Sigmoid colon (tissue), 7 donors: ENCODE measurements at regions of chr6 and their contacts with region 1.

Region 1: GRCh38 chr6:21664314-21665109 is 71.0 kb downstream of the SOX4 start:
- DNase-seq: peak; percentile 74
- H3K4me3 ChIP-seq: peak overlapping the region; percentile 42 to 73 (median 64)
- H3K27ac ChIP-seq: peak overlapping the region; percentile 19 to 81 (median 62)
- H3K4me1 ChIP-seq: peaks cover 0 to 47% (median 16%) of the 10 kb centered on the region in 4 donors
- H3K27me3 ChIP-seq: peaks cover 0 to 10% (median 0%) of the 10 kb centered on the region in 3 donors
- CTCF ChIP-seq: no peak
- EP300 ChIP-seq: no peak
- POLR2A ChIP-seq: no peak

Region 2: DNA sequence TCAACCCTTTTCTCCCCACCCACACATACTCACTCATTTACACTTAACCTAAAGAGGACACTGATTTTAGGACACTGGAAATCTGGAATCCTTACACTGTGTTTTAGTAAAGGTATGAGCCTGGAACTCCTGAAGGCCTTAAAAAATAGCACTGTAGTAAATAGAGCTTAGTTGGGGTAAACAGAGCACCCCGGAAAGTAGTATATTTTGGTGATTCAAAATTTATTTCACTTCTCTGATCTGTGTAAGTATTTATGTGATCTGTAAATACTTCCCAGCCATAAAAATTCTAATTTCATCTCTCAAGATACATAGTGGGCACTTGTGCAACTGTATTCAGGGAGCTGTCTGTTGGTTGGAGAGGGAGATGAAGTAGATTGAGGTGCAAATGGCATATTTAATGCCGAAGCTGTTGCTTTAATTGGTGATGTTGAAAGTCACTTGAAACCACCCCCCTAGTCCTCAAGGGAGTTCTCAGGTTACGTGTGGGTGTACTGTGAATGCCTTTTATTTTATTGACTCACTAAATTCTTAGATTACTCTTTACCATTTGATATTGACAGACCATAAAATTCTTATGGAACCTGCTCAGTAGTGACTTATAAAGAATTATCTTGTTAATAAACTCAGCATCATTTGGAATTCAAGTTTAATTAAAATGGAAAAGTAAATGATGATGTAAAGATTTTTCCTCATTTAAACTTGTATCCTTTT is 84.0 kb after region 1 on chr6:
- intact Hi-C with region 1: loop called (anchors 5 kb)
- DNase-seq: no peak
- H3K4me3 ChIP-seq: no peak overlapping the region
- H3K27ac ChIP-seq: peak overlapping the region in 3 of 4 donors; percentile 49 to 63 (median 60)
- H3K4me1 ChIP-seq: peaks cover 0 to 53% (median 38%) of the 10 kb centered on the region in 4 donors
- H3K27me3 ChIP-seq: no peaks in the 10 kb centered on the region
- CTCF ChIP-seq: no peak
- EP300 ChIP-seq: no peak
- POLR2A ChIP-seq: no peak

Region 3: GRCh38 chr6:21808045-21808470 is 143.5 kb after region 1 on chr6:
- intact Hi-C with region 1: loop called (anchors 2 kb)
- DNase-seq: no peak
- H3K4me3 ChIP-seq: peak overlapping the region in 1 of 4 donors; percentile 19
- H3K27ac ChIP-seq: peak overlapping the region; percentile 38 to 82 (median 71)
- H3K4me1 ChIP-seq: peaks cover 0 to 41% (median 22%) of the 10 kb centered on the region in 4 donors
- H3K27me3 ChIP-seq: no peaks in the 10 kb centered on the region
- CTCF ChIP-seq: no peak
- EP300 ChIP-seq: no peak
- POLR2A ChIP-seq: no peak

Region 4: DNA sequence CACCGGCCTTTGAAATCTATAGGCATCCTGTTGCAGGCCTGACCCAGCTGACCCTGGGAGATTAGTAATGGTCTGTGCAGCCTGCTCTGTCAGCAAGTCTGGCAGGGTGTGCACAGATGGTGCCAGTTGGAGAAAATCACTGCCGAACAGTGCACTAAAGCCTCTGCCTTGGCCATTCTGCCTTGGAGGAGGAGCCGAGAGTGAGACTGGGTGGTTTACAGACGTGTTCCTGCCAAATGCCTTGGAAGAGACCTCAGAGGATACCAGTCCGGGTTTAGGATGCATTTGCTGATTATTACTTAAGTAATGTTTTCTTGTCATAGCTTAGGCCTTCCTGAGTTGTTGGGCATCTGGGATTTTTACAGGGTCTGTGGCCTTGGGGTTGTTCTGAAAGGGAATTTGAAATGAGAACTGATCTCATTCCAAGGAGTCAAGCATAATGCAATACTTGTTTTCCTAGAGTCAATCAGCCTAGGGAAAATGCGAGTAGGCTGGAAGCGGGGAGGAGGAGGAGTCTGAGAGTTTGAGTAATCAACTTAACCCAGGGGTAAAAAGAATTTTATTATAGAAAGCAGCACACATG is 221.1 kb after region 1 on chr6:
- intact Hi-C with region 1: loop called (anchors 5 kb)
- DNase-seq: peak; percentile 74
- H3K4me3 ChIP-seq: no peak overlapping the region
- H3K27ac ChIP-seq: peak overlapping the region; percentile 62 to 79 (median 74)
- H3K4me1 ChIP-seq: peaks cover 0 to 39% (median 34%) of the 10 kb centered on the region in 4 donors
- H3K27me3 ChIP-seq: no peaks in the 10 kb centered on the region
- CTCF ChIP-seq: no peak
- EP300 ChIP-seq: no peak
- POLR2A ChIP-seq: no peak

Region 5: DNA sequence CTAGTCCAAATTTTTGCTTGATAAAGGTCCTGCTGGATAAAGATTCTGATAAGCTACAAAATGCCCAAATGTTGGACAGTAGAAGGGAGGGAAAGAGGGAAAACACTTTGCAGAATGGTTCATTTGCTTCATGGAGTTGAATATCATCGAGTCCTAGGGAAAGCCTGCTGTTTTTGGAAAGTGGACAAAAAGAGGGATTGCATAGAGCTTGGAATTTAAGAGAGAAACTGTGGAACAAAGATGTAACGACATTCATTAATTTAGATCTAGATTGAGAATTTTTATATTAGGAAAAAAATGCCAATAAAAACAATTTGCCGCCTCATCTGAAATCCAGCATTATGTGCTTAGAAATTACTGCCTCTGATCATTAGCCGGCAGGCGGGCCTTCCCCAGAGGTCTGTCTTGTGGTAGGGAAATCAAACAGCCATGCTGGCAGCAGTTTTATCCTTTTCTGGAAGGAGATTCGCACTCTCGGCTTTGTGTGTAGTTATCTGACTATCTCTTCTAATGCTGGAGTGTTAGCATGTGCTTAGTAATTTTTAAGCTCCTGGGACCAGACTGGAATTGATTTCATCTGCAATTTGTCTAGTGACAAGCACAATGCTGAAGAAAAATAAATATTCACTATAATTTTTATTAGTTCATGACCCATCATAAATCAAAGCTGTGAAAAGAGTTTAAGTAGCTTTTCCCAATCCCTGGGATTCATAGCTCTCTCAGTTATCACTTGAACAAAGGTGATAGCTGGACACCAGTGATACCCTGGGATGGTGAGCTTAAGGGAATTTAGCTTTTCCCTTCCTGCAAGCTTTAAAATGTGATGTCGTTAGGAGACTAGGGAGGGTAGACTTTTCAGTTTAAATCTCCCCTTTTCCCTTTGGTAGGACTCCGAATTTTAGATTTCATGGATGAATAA is 302.8 kb after region 1 on chr6:
- intact Hi-C with region 1: loop called (anchors 10 kb)
- DNase-seq: no peak
- H3K4me3 ChIP-seq: no peak overlapping the region
- H3K27ac ChIP-seq: peak overlapping the region in 3 of 4 donors; percentile 16 to 23 (median 17)
- H3K4me1 ChIP-seq: peaks cover 0 to 12% (median 12%) of the 10 kb centered on the region in 4 donors
- H3K27me3 ChIP-seq: no peaks in the 10 kb centered on the region
- CTCF ChIP-seq: no peak
- EP300 ChIP-seq: no peak
- POLR2A ChIP-seq: no peak

Region 6: DNA sequence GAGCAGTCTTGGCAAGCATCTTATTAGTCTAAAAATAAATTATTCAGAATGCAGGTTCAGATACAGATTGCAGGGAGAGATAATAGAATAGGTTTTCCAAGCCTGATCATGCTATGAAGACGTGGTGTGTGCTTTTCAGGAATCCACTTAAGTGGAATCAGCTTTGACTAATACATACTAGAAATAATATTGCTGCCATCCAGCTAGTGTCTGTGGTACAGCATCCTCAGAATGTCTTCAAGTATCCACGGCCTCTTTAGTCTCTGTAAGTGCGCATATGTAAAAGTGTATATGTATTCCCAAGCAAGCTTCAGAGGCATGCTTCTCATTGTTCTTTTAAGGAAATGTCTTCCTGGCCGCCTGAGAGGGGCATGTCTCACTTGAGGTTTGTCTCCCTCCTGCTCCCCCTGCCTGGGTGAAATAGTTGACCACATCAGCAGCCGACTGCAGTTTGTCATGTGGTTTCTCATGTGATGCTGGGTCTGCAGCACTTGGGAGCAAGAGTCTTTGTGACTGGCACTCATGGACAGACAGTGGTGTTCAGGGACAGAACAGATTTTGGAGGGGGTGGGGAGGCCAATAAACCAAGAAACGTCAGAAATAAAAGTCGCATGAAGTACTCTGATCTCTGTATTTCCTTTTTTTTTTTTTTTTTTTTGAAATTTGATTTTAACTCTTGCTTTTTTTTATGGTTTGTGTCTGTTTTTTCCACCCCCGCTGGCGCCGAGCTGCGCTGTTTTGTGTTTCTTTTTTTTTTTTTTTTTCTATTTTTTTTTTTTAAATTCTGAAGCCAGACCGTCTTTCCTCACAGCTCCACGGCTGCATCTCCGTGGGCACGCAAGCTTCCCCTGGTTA is 481.5 kb after region 1 on chr6:
- intact Hi-C with region 1: loop called (anchors 5 kb)
- DNase-seq: no peak
- H3K4me3 ChIP-seq: peak overlapping the region in 3 of 4 donors; percentile 33 to 47 (median 43)
- H3K27ac ChIP-seq: peak overlapping the region in 1 of 4 donors; percentile 57
- H3K4me1 ChIP-seq: peaks cover 0 to 62% (median 49%) of the 10 kb centered on the region in 4 donors
- H3K27me3 ChIP-seq: no peaks in the 10 kb centered on the region
- CTCF ChIP-seq: peak in 3 of 4 experiments; percentile 24 to 32 (median 31)
- EP300 ChIP-seq: peak in 1 of 4 donors; percentile 30
- POLR2A ChIP-seq: no peak